ENCODE measurements at regions of chr14 and their contacts with region 1.

Region 1: GRCh38 chr14:97056086-97056485 is 258.9 kb downstream of the VRK1 start:
- H3K4me3 Mint-ChIP-seq: no peak overlapping the region
- H3K27ac Mint-ChIP-seq: no peak overlapping the region
- H3K4me1 Mint-ChIP-seq: no peaks in the 10 kb centered on the region
- H3K27me3 Mint-ChIP-seq: peaks cover 20% of the 10 kb centered on the region

Region 2: DNA sequence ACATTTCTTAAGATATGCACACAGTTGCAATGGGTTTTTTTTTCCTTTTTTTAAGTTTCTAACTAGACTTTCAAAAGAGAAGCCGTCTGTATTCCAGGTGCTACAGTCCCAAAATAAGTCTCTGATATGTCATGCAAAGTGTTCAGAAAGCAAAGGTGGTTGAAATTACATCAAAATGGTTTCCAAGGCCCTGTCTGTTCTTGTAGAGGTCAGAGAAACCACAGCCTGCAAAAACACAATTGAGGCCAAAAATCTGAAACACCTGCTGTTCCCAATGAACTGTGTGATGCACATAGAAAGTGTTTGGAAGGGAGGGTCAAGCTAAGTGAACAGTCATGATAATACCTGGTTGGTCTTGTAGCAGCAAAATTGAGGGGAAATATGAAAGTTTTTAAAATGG is 167.9 kb before region 1 on chr14:
- intact Hi-C with region 1: no loop called
- H3K4me3 Mint-ChIP-seq: no peak overlapping the region
- H3K27ac Mint-ChIP-seq: no peak overlapping the region
- H3K4me1 Mint-ChIP-seq: no peaks in the 10 kb centered on the region
- H3K27me3 Mint-ChIP-seq: no peaks in the 10 kb centered on the region

Region 3: GRCh38 chr14:97581016-97581415 is 524.9 kb after region 1 on chr14:
- intact Hi-C with region 1: loop called (anchors 10 kb)
- H3K4me3 Mint-ChIP-seq: no peak overlapping the region
- H3K27ac Mint-ChIP-seq: no peak overlapping the region
- H3K4me1 Mint-ChIP-seq: no peaks in the 10 kb centered on the region
- H3K27me3 Mint-ChIP-seq: peaks cover 3% of the 10 kb centered on the region

Measured in dendritic cell treated with granulocyte-macrophage colony-stimulating factor and Interleukin-4, amounts not matched to agents 40 ng/mL and 50 ng/mL, for 4 days (primary cell).